Caco-2 (cell line): ENCODE measurements at regions of chr21 and their contacts with region 1.

Region 1: GRCh38 chr21:25385911-25386474 is 221.3 kb downstream of the MRPL39 start:
- DNase-seq: peak; percentile 54 to 64
- H3K4me3 ChIP-seq: no peak overlapping the region
- H3K4me3 Mint-ChIP-seq: no peak overlapping the region
- H3K27ac Mint-ChIP-seq: no peak overlapping the region
- H3K4me1 ChIP-seq: no peaks in the 10 kb centered on the region
- H3K4me1 Mint-ChIP-seq: peaks cover 7% of the 10 kb centered on the region
- H3K27me3 ChIP-seq: no peaks in the 10 kb centered on the region
- H3K27me3 Mint-ChIP-seq: peaks cover 5% of the 10 kb centered on the region
- CTCF ChIP-seq: peak; percentile 42 to 73

Region 2: DNA sequence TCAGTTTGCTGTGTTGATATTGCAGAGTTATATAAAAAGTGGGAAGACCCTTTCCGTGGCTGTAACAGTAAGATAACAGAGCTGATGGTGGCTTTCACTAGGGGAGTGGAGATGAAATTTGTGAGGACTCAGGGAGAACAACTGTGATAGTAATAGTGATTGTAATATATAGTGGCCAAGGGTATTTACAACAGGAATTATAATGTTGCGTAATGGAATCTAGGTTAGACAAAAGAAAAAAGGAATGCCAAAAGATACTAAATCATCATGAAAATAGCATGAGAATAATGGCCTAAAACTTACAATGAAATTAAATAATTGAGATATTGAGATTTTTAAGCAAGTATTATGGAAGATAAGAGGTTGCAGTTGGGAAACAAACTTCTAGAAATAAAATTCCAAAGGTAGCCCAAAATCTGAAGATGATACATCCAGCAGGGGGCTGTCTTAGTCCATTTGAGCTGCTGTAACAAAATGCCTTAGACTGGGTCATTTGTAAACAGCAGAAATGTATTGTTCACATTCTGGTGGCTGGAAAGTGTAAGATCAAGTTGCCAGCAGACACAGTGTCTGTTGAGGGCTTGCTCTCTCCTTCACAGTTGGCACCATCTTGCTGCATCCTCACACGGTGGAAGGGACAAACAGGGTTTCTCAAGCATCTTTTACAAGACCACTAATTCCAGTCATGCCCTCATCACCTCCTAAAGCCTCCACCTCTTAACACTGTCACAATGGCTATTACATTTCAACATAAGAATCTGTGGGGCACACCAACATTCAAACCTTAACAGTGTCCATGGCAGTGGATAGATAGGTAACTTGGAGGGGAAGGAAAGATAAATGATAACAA is 489.9 kb before region 1 on chr21:
- CTCF ChIA-PET with region 1: interaction called, 4 read pairs
- POLR2A ChIA-PET with region 1: no interaction called
- intact Hi-C with region 1: loop called (anchors 1 kb)
- DNase-seq: peak in 1 of 2 experiments; percentile 13
- H3K4me3 ChIP-seq: no peak overlapping the region
- H3K4me3 Mint-ChIP-seq: no peak overlapping the region
- H3K27ac Mint-ChIP-seq: no peak overlapping the region
- H3K4me1 ChIP-seq: no peaks in the 10 kb centered on the region
- H3K4me1 Mint-ChIP-seq: no peaks in the 10 kb centered on the region
- H3K27me3 ChIP-seq: no peaks in the 10 kb centered on the region
- H3K27me3 Mint-ChIP-seq: no peaks in the 10 kb centered on the region
- CTCF ChIP-seq: peak in 1 of 2 experiments; percentile 53

Region 3: GRCh38 chr21:25039461-25040380 is 346.3 kb before region 1 on chr21:
- CTCF ChIA-PET with region 1: no interaction called
- POLR2A ChIA-PET with region 1: no interaction called
- intact Hi-C with region 1: loop called (anchors 10 kb)
- DNase-seq: peak in 1 of 2 experiments; percentile 1
- H3K4me3 ChIP-seq: no peak overlapping the region
- H3K4me3 Mint-ChIP-seq: peak overlapping the region; percentile 60
- H3K27ac Mint-ChIP-seq: no peak overlapping the region
- H3K4me1 ChIP-seq: no peaks in the 10 kb centered on the region
- H3K4me1 Mint-ChIP-seq: no peaks in the 10 kb centered on the region
- H3K27me3 ChIP-seq: no peaks in the 10 kb centered on the region
- H3K27me3 Mint-ChIP-seq: no peaks in the 10 kb centered on the region
- CTCF ChIP-seq: no peak

Region 4: DNA sequence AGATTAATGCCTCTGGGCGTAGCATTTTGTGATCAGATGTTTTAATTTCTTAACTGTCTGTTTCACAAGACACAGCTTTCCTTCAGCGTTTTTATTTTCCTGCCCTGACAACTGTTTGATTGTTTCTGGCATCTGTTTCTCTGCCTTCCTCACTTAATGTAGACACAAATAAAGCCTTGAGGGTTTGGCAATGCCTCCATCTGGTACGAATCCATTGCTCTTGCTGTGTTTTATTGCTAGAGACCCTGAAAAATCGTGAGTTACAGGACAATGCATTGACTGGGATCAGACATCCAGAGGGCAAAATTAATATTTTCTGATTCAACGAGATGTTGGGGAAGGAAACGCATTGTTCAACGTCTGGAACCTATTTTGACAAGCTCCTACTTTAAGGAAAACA is 142.2 kb before region 1 on chr21:
- CTCF ChIA-PET with region 1: no interaction called
- POLR2A ChIA-PET with region 1: no interaction called
- intact Hi-C with region 1: no loop called
- DNase-seq: no peak
- H3K4me3 ChIP-seq: no peak overlapping the region
- H3K4me3 Mint-ChIP-seq: no peak overlapping the region
- H3K27ac Mint-ChIP-seq: no peak overlapping the region
- H3K4me1 ChIP-seq: no peaks in the 10 kb centered on the region
- H3K4me1 Mint-ChIP-seq: no peaks in the 10 kb centered on the region
- H3K27me3 ChIP-seq: no peaks in the 10 kb centered on the region
- H3K27me3 Mint-ChIP-seq: no peaks in the 10 kb centered on the region
- CTCF ChIP-seq: no peak

Region 5: DNA sequence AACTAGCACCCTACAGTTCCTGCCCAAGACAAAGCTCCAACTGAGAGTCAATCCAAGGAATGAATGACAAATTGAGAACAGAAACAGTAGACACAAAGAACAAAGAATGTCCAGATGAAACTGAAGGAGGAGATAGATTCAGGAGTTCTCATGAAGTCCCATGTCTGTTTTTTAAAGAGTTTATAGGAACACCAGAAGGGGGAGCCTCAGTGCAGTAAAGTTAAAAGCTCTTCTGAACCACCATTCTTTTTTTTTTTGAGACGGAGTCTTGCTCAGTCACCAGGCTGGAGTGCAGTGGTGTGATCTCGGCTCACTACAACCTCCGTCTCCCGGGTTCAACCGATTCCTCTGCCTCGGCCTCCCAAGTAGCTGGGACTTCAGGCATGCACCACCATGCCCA is 102.3 kb before region 1 on chr21:
- CTCF ChIA-PET with region 1: interaction called, 25 read pairs
- POLR2A ChIA-PET with region 1: no interaction called
- intact Hi-C with region 1: loop called (anchors 1 kb)
- DNase-seq: peak in 1 of 2 experiments; percentile 33
- H3K4me3 ChIP-seq: no peak overlapping the region
- H3K4me3 Mint-ChIP-seq: no peak overlapping the region
- H3K27ac Mint-ChIP-seq: no peak overlapping the region
- H3K4me1 ChIP-seq: no peaks in the 10 kb centered on the region
- H3K4me1 Mint-ChIP-seq: no peaks in the 10 kb centered on the region
- H3K27me3 ChIP-seq: no peaks in the 10 kb centered on the region
- H3K27me3 Mint-ChIP-seq: peaks cover 5% of the 10 kb centered on the region
- CTCF ChIP-seq: peak; percentile 22 to 39

Region 6: GRCh38 chr21:25350056-25350455 is 35.9 kb before region 1 on chr21:
- CTCF ChIA-PET with region 1: no interaction called
- POLR2A ChIA-PET with region 1: no interaction called
- intact Hi-C with region 1: loop called (anchors 1 kb)
- DNase-seq: peak in 1 of 2 experiments; percentile 2
- H3K4me3 ChIP-seq: no peak overlapping the region
- H3K4me3 Mint-ChIP-seq: no peak overlapping the region
- H3K27ac Mint-ChIP-seq: no peak overlapping the region
- H3K4me1 ChIP-seq: no peaks in the 10 kb centered on the region
- H3K4me1 Mint-ChIP-seq: no peaks in the 10 kb centered on the region
- H3K27me3 ChIP-seq: no peaks in the 10 kb centered on the region
- H3K27me3 Mint-ChIP-seq: peaks cover 6% of the 10 kb centered on the region
- CTCF ChIP-seq: peak in 1 of 2 experiments; percentile 15

Region 7: DNA sequence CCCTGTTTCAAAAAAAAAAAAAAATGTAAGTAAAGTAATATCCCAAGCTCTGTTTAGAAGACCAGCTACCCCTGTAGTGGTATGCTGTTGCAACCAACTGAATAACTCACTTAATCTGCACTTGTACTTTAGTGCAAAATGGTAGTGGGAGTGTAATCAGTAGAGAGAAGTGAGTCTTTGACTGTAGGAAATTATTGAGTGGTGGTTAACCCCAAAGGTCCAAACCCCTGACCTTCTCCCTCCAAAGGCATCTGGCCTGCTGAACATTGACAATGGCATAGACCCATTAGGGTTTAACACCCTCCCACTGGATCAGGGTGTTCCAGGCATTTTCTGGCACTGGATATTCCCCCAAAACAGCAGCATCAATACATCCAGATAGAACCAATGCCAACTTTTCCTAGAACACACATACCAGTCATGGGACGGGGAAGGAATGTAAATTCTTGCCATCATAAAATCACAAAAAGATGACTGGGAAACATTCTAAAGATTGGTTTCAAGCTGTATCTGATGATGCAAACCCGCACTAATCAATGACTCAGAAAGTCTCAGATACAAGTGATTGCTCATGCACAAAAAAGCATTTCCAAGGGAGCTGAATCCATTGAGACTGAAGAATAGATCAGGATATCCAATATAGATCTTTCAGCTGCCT is 111.0 kb after region 1 on chr21:
- CTCF ChIA-PET with region 1: no interaction called
- POLR2A ChIA-PET with region 1: no interaction called
- intact Hi-C with region 1: no loop called
- DNase-seq: no peak
- H3K4me3 ChIP-seq: no peak overlapping the region
- H3K4me3 Mint-ChIP-seq: no peak overlapping the region
- H3K27ac Mint-ChIP-seq: no peak overlapping the region
- H3K4me1 ChIP-seq: no peaks in the 10 kb centered on the region
- H3K4me1 Mint-ChIP-seq: no peaks in the 10 kb centered on the region
- H3K27me3 ChIP-seq: no peaks in the 10 kb centered on the region
- H3K27me3 Mint-ChIP-seq: no peaks in the 10 kb centered on the region
- CTCF ChIP-seq: no peak